B cell (primary cell): ENCODE measurements at regions of chr1 and their contacts with region 1.

Region 1: DNA sequence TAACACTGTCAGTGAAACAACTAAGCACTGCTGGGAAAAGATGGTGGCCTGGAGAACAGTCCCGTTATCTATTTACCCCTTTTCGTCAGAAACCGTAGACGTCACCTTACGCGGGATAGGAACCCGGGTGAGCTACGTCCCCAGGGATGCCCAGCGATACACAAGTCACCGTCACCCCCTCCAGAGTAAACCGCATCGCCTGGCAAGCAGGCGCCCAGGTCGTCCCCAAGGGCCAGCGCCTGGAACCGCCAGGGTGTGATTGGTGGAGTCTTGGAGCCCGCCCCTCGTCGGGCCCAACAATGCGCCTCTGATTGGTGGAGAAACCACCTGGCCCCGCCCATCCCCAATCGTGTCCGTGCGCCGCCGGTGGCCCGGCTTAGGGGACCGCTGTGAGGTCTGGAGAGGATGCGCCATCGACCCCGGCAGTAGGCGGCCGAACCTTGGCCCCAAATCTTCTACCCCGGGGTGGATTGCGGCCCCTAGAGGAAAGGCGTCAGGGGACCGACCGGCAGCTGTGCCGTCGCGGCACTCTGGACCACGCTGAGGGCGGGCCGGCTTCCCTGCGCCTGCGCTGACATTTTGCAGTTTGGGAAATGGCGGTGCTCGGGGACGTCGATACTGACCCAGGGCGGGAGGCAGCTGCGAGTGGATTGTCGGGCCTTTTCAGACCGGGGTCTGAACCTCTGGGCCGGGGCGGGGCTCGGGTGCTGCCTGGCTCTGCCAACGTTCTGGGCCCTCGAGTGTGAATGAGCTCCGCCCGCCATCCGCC is 34.4 kb downstream of the SLC2A1 start:
- DNase-seq: peak; percentile 97
- ATAC-seq: peak; percentile 86
- H3K4me3 ChIP-seq: peak overlapping the region; percentile 48 to 83 (median 80)
- H3K4me3 Mint-ChIP-seq: peak overlapping the region; percentile 86
- H3K27ac ChIP-seq: peak overlapping the region; percentile 96 to 98
- H3K27ac Mint-ChIP-seq: peak overlapping the region; percentile 92
- H3K4me1 ChIP-seq: peaks cover 23% of the 10 kb centered on the region in 2 donors
- H3K4me1 Mint-ChIP-seq: peaks cover 43% of the 10 kb centered on the region
- H3K27me3 ChIP-seq: no peaks in the 10 kb centered on the region
- H3K27me3 Mint-ChIP-seq: no peaks in the 10 kb centered on the region
- CTCF ChIP-seq: no peak

Region 2: DNA sequence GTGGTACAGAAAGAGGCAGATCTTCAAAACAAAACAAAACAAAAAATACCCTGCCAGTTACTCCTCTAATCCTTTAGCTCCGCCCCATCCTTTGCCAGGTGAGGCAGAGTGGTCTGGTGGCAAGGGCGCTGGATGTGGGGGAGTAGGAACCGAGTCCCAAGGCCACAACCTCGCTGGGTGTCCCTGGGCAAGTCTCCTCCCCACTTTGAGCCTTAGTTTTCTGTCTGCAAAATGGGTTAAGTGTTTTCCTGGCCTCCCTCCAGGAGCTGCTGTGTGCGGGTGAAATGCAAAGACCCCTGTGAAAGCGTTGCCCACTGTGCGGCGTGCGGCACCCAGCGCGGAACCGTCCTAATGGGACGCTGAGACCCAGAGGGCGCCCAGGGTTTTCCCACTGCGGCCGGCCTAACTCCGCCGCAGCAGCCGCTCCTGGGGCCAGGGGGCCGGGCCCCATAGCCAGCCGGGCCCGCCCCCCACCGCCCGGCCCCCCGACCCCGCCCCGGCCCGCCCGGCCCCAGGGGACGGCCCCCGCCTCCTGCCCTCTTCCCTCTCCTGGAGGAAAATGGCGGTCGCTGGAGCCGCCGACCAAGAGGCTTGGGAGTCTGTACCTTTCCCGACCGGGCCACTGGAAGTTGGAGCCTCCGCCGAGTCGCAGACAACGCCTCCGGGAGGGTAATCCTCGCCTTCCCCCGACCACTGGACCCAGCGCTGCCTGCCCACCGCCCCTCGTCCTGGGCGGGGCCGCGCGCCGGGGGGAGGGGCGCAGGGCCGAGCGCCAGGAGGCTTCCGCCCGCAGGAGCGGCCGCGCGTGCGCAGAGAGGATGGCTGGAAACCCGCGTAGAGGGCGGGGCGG is 107.5 kb before region 1 on chr1 and contains the starts of genes ERMAP and SVBP:
- CTCF ChIA-PET with region 1: no interaction called
- POLR2A ChIA-PET with region 1: no interaction called
- intact Hi-C with region 1: loop called (anchors 1 kb)
- DNase-seq: peak; percentile 97
- ATAC-seq: peak; percentile 86
- H3K4me3 ChIP-seq: peak within 1 kb of the TSS; percentile 57 to 82 (median 77)
- H3K4me3 Mint-ChIP-seq: peak within 1 kb of the TSS; percentile 89
- H3K27ac ChIP-seq: peak within 1 kb of the TSS; percentile 75 to 82
- H3K27ac Mint-ChIP-seq: peak within 1 kb of the TSS; percentile 92
- H3K4me1 ChIP-seq: peaks cover 13% of the 10 kb centered on the region in 2 donors
- H3K4me1 Mint-ChIP-seq: peaks cover 20% of the 10 kb centered on the region
- H3K27me3 ChIP-seq: no peaks in the 10 kb centered on the region
- H3K27me3 Mint-ChIP-seq: no peaks in the 10 kb centered on the region
- CTCF ChIP-seq: no peak
- total RNA-seq, gene ERMAP: 13.1 and 13.5 TPM in 2 replicates
- total RNA-seq, gene SVBP: 21.9 and 23.2 TPM in 2 replicates

Region 3: DNA sequence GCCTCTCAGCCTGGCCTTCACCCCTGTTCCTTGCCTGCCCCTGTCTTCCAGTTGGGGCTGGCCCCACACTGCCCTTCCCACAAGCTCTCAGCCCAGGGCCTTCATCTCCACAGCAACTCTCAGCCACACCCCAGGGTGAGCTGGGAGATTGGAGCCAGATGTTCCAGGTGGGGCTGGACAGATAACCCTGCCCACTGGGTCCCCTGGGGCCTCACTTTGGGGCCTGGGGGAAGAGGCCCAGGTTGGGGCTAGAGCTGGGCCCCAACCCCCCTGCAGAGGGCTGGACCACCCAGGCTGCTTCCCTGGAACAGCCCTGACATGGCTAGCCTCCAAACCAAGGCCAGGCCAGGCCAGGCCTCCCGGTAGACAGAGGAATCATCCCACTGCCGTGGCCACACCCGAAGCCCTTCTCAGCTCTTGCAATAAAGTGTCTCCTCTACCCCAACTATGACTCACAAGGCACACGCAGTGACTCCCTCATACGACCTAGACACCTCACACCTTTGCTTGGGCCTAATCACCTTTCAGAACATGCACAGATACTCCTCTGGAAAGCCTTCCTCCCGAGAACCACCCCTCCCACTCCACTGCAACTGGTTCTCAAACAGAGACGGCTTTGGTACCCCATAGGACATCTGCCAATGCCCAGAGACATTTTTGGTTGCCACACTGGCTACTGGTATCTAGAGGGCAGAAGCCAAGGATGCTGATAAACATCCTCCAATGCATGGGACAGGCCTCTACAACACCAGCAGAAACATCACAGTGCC is 12.2 kb after region 1 on chr1:
- CTCF ChIA-PET with region 1: interaction called, 24 read pairs
- POLR2A ChIA-PET with region 1: interaction called, 19 read pairs
- intact Hi-C with region 1: loop called (anchors 1 kb)
- DNase-seq: no peak
- ATAC-seq: no peak
- H3K4me3 ChIP-seq: no peak overlapping the region
- H3K4me3 Mint-ChIP-seq: peak overlapping the region; percentile 61
- H3K27ac ChIP-seq: peak overlapping the region; percentile 87 to 97
- H3K27ac Mint-ChIP-seq: peak overlapping the region; percentile 97
- H3K4me1 ChIP-seq: peaks cover 96 to 100% of the 10 kb centered on the region in 2 donors
- H3K4me1 Mint-ChIP-seq: peaks cover 98% of the 10 kb centered on the region
- H3K27me3 ChIP-seq: no peaks in the 10 kb centered on the region
- H3K27me3 Mint-ChIP-seq: no peaks in the 10 kb centered on the region
- CTCF ChIP-seq: no peak

Region 4: DNA sequence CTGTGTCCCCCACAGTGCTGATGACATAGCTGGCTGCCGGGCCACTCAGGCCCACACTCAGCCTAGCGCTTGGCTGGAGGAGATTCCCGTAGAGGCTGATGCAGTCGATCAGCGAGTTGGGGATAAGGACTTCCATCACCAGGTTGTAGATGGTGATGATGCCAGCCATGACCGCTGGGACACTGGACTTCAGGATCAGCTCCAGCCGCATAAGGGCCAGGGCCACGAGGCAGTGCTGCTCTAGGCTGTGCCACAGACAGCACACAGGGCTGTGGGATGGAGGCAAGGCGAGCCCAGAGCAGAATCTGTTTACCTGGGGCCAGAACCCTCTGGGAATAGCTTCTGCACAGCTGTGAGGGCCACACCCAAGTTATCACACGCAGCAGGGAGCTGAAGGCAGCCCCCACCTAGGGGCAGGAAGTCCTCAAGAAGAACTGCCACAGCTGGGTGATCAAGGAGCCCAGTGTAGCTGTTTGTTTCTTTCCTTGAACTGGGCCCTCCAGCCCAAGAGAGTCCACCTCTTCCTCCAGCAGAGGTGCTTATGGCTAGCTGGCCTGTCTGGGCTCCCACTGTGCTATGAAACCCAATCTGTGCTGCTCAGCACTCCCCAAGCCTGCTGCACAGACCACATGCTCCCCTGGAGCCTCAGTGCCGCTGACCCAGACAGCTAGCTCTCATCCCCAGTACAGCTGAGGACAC is 28.2 kb after region 1 on chr1:
- CTCF ChIA-PET with region 1: interaction called, 82 read pairs
- POLR2A ChIA-PET with region 1: interaction called, 209 read pairs
- intact Hi-C with region 1: loop called (anchors 1 kb)
- DNase-seq: peak; percentile 89
- ATAC-seq: peak; percentile 82
- H3K4me3 ChIP-seq: peak overlapping the region in 4 of 5 experiments; percentile 19 to 56 (median 30)
- H3K4me3 Mint-ChIP-seq: peak overlapping the region; percentile 93
- H3K27ac ChIP-seq: peak overlapping the region; percentile 94 to 95
- H3K27ac Mint-ChIP-seq: peak overlapping the region; percentile 99
- H3K4me1 ChIP-seq: peaks cover 91 to 99% of the 10 kb centered on the region in 2 donors
- H3K4me1 Mint-ChIP-seq: peaks cover 91% of the 10 kb centered on the region
- H3K27me3 ChIP-seq: no peaks in the 10 kb centered on the region
- H3K27me3 Mint-ChIP-seq: no peaks in the 10 kb centered on the region
- CTCF ChIP-seq: no peak

Region 5: DNA sequence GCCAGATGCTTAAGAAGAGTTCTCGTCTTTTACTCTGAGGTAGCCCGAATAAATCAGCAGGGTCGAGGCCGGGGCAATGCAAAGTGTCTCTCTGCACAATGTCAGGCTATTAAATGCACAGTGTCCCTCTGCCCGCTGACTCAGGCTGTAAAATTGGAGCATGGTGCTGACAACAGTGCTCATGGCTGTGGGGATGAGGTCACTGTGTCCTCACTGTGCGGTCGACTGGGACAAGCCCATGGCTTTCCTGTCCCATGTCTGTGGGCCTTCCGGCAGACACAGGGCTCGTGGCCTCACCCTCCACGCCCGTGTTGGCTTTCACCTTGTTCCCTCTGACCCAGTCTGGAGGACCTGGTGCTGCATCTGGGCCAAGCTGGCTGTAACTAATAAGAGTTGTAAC is 49.0 kb after region 1 on chr1:
- CTCF ChIA-PET with region 1: interaction called, 16 read pairs
- POLR2A ChIA-PET with region 1: no interaction called
- intact Hi-C with region 1: no loop called
- DNase-seq: no peak
- ATAC-seq: no peak
- H3K4me3 ChIP-seq: no peak overlapping the region
- H3K4me3 Mint-ChIP-seq: no peak overlapping the region
- H3K27ac ChIP-seq: no peak overlapping the region
- H3K27ac Mint-ChIP-seq: no peak overlapping the region
- H3K4me1 ChIP-seq: no peaks in the 10 kb centered on the region
- H3K4me1 Mint-ChIP-seq: no peaks in the 10 kb centered on the region
- H3K27me3 ChIP-seq: no peaks in the 10 kb centered on the region
- H3K27me3 Mint-ChIP-seq: no peaks in the 10 kb centered on the region
- CTCF ChIP-seq: no peak

Region 6: DNA sequence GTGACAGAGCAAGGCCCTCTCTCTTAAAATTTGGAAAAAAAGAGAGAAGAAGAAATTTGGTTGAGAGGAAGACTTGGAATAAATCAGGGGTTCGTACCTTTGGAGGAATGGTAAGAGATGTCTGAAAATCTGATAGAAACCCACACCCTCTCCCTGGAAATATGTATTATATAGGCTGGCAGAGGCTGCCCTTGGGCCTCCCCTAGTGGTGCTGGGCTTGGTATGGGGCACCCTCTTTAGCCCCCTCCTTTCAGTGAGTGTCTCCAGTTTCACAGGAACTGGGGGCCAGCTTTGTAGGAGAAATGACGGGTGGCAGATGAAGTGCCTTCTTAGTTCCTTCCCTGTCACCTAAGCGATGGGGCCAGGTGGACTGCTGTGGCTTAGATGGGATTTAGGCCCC is 117.3 kb after region 1 on chr1:
- CTCF ChIA-PET with region 1: interaction called, 19 read pairs
- POLR2A ChIA-PET with region 1: no interaction called
- intact Hi-C with region 1: no loop called
- DNase-seq: no peak
- ATAC-seq: no peak
- H3K4me3 ChIP-seq: no peak overlapping the region
- H3K4me3 Mint-ChIP-seq: no peak overlapping the region
- H3K27ac ChIP-seq: no peak overlapping the region
- H3K27ac Mint-ChIP-seq: no peak overlapping the region
- H3K4me1 ChIP-seq: peaks cover 0 to 4% of the 10 kb centered on the region in 2 donors
- H3K4me1 Mint-ChIP-seq: peaks cover 7% of the 10 kb centered on the region
- H3K27me3 ChIP-seq: no peaks in the 10 kb centered on the region
- H3K27me3 Mint-ChIP-seq: peaks cover under 1% of the 10 kb centered on the region
- CTCF ChIP-seq: no peak